ENCODE measurements at regions of chr22 and their contacts with region 1.

Region 1: GRCh38 chr22:33018232-33018864 is 39.8 kb downstream of the SYN3 start:
- DNase-seq: peak; percentile 45 to 60 (median 50)
- ATAC-seq: peak; percentile 87
- H3K4me3 ChIP-seq: no peak overlapping the region
- H3K27ac ChIP-seq: no peak overlapping the region
- H3K4me1 ChIP-seq: no peaks in the 10 kb centered on the region
- H3K27me3 ChIP-seq: 0 out of 5 replicates have a peak, but pooled peaks cover 0 to 2% of the 10 kb centered on the region in 2 experiments
- CTCF ChIP-seq: peak; percentile 66 to 78 (median 71)
- EP300 ChIP-seq: no peak
- POLR2A ChIP-seq: no peak
- RAD21 ChIP-seq: peak; percentile 13 to 61; a peak in 3 of 4 replicates

Region 2: GRCh38 chr22:33049119-33049729 is 30.9 kb after region 1 on chr22:
- CTCF ChIA-PET with region 1: no interaction called
- POLR2A ChIA-PET with region 1: no interaction called
- in situ Hi-C with region 1: no loop called
- intact Hi-C with region 1: loop called (anchors 1 kb)
- DNase-seq: peak; percentile 61 to 66 (median 64)
- ATAC-seq: peak; percentile 86
- H3K4me3 ChIP-seq: no peak overlapping the region
- H3K27ac ChIP-seq: no peak overlapping the region
- H3K4me1 ChIP-seq: no peaks in the 10 kb centered on the region
- H3K27me3 ChIP-seq: peaks cover 0 to 3% of the 10 kb centered on the region in 2 experiments; a peak in 1 of 5 replicates
- CTCF ChIP-seq: peak; percentile 59 to 74 (median 72)
- EP300 ChIP-seq: no peak
- POLR2A ChIP-seq: no peak
- RAD21 ChIP-seq: peak in 1 of 2 experiments; percentile 49; a peak in 1 of 4 replicates

Region 3: GRCh38 chr22:33209930-33210784 is 191.8 kb after region 1 on chr22:
- CTCF ChIA-PET with region 1: no interaction called
- POLR2A ChIA-PET with region 1: no interaction called
- in situ Hi-C with region 1: no loop called
- intact Hi-C with region 1: loop called (anchors 5 kb)
- DNase-seq: peak; percentile 13 to 44 (median 28)
- ATAC-seq: peak; percentile 87
- H3K4me3 ChIP-seq: no peak overlapping the region
- H3K27ac ChIP-seq: no peak overlapping the region
- H3K4me1 ChIP-seq: no peaks in the 10 kb centered on the region; a peak in 1 of 5 replicates
- H3K27me3 ChIP-seq: peaks cover 2 to 6% of the 10 kb centered on the region in 2 experiments; a peak in 2 of 5 replicates
- CTCF ChIP-seq: peak; percentile 46 to 55 (median 50); a peak in 5 of 6 replicates
- EP300 ChIP-seq: no peak
- POLR2A ChIP-seq: no peak
- RAD21 ChIP-seq: peak in 1 of 2 experiments; percentile 46; a peak in 2 of 4 replicates